ENCODE measurements at regions of chr11 and their contacts with region 1.

Region 1: DNA sequence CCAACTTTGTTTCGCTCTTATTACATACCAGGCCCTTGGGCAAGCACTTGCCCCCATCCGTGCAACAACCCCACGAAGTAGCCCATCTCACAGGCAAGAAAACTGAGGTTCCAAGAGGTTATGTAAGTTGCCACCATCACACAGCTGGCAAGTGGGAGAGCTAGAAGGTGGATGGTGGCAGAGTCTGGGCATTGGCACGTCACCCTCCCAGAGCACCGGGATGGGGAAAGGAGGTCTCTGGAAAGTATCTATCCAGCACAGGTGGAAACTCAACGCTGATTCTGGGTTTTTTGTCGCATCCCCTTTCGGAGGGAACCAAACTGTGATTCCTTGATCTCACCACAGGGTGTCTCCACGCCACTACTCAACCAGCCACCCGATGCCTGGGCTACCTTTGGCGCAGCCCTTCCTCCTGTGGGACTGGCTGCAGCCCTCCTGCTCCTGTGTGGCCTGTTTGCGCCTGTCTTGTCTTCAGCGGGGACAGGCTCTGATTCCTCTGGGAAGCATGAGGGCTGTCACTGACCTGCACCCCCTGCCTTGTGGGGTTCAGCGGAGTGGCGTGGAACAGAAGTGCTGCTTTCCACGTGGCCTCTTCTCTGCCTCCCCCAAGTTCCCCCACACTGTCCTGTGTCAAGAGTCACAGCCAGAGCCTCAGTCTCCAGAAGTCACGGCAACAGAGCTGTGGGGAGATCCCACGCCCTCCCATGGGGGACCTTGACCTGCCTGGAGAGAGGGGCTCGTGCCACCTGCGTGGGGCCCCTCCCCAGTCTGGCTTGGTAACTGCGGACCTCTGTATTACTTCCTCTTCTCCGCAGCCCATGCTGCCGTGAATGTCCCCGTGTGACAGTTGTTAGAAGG is 34.4 kb upstream of the TRIM29 start:
- DNase-seq: no peak
- H3K4me3 ChIP-seq: no peak overlapping the region
- CTCF ChIP-seq: peak; percentile 82

Region 2: GRCh38 chr11:120151536-120151935 is 20.7 kb before region 1 on chr11:
- CTCF ChIA-PET with region 1: interaction called, 10 read pairs
- POLR2A ChIA-PET with region 1: no interaction called
- DNase-seq: no peak
- H3K4me3 ChIP-seq: no peak overlapping the region
- CTCF ChIP-seq: no peak

Region 3: DNA sequence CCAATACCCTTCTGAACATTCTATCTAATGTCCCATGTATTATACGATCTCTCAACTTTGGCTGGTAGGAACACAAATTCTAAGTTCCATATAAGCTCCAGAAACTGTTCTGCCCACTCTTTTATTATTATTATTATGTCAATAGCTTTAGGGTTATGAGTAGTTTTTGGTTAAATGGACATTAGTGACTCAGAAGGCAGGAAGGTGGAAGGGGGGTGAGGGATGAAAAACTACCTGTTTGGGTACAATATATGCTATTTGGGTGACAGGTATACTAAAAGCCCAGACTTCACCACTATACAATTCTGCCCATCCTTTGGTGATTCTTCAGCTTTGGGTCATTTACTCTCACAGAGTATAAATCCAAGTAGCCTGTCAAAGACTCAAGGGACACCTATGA is 11.8 kb before region 1 on chr11:
- CTCF ChIA-PET with region 1: interaction called, 20 read pairs
- POLR2A ChIA-PET with region 1: no interaction called
- DNase-seq: no peak
- H3K4me3 ChIP-seq: no peak overlapping the region
- CTCF ChIP-seq: no peak

Region 4: DNA sequence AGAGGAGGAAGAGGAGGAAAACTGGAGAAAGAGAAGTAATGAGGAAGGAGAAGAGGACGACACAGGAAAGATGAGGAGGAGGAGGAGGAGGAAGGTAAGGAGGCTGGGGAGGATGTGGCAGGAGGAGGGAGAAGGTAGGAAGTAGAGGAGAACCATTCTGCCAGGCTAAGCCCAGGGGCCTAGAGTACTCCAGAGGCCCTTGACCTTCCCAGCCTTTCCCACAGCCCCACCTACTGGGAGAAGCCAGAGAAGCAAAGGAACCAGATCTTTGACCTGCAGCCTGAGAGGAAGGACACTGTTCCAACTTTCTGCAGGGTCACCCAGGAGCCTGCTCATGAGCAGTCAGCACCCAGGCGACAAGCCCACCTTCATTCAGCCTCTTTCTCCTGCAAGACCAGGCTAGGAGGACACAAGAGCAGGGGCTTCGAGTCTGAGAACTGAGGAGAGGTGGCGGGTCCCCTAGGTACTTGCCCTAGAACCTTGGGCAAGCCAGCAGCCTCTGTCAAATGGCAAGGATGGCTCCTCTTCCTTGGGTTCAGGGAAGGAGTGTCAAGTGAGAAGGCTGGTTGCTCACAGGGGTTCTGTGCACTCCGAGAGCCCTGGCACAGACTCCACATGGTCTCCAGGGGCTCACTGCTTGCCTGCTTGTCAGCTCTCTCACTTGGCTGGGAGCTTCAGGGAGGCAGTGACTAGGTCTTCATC is 10.7 kb after region 1 on chr11:
- CTCF ChIA-PET with region 1: interaction called, 107 read pairs
- POLR2A ChIA-PET with region 1: no interaction called
- DNase-seq: no peak
- H3K4me3 ChIP-seq: no peak overlapping the region
- CTCF ChIP-seq: peak; percentile 28

Region 5: DNA sequence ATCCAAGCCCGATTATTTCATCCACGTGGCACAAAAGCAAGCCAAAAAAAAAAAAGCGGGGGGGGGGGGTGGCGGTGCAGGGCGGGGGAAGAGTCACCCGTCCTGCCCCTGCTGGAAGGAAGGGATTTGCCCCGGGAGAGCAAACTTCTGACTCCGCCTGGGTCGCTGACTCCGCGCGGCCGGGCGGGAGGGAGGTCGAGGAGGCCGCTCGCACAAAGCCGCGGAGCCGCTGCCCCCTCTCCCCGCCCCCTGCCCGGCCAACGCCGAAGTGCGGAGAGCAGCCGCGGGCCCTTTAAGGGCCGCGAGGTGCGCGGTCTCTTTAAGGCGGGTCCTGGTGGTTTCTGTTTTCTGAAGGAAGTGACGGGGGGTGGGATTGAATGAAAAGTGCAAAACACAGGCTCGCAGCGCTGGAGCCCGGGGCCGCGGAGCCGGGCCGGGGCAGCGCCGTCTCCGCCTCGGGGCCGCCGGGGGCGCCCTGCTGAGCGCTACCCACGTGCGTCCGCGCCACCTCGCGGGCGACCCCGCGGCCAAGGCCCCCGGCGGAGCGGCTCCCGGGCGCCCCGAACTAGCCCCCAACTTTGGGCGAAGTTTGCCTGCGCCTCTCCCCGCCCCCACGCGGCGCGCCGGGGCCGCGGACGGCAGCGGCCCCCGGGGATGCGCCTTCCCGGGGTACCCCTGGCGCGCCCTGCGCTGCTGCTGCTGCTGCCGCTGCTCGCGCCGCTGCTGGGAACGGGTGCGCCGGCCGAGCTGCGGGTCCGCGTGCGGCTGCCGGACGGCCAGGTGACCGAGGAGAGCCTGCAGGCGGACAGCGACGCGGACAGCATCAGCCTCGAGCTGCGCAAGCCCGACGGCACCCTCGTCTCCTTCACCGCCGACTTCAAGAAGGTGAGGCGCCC is 38.6 kb after region 1 on chr11 and contains the start of gene OAF:
- CTCF ChIA-PET with region 1: interaction called, 13 read pairs
- POLR2A ChIA-PET with region 1: no interaction called
- DNase-seq: no peak
- H3K4me3 ChIP-seq: peak within 1 kb of the TSS; percentile 74
- CTCF ChIP-seq: peak; percentile 21

Region 6: GRCh38 chr11:120235024-120235861 is 63.0 kb after region 1 on chr11:
- CTCF ChIA-PET with region 1: interaction called, 461 read pairs
- POLR2A ChIA-PET with region 1: no interaction called
- DNase-seq: no peak
- H3K4me3 ChIP-seq: no peak overlapping the region
- CTCF ChIP-seq: peak; percentile 90

Region 7: DNA sequence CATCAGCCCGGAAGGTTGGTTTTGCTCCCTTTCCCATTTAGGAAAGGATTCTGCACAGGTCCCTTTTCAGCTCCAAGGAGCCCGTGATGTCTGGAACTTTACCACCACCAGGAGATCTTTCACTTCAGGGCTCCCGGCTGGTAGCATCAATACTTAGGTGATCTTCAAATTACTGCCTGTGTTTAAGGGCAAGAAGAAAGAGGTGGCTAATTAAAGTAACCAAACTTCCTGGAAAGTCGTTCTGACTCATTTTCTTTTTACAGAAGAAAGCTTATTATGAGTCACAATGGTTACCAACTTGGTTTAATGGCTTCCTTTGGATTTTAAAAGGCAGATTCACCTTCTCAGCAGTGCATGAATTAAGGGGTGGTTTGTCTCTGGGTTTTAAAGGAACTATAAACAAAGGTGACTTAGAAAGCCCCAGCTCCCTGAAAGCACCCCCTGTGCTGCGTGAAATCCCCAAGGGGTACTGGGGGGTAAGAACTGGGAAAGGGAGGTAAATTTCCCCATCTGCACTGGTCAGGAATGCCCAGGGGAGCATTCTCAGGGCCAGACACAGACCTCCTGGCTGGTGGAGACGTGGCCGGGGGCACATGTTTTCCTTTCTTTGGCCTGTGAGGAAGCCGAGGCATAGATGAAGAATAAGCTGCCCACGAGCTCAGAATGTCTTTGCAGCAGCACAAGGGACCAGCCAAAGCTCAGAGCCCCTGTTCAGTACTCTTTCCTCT is 76.4 kb after region 1 on chr11:
- CTCF ChIA-PET with region 1: interaction called, 55 read pairs
- POLR2A ChIA-PET with region 1: no interaction called
- DNase-seq: no peak
- H3K4me3 ChIP-seq: no peak overlapping the region
- CTCF ChIP-seq: no peak

Measured in AG04449 (cell line).